Natural killer cell (primary cell): ENCODE measurements at regions of chr6 and their contacts with region 1.

Region 1: GRCh38 chr6:125114248-125114858 is 39.2 kb upstream of the TPD52L1 start:
- DNase-seq: peak in 1 of 2 donors; percentile 68
- ATAC-seq: peak in 2 of 3 donors; percentile 40 to 61
- H3K4me3 ChIP-seq: no peak overlapping the region
- H3K4me3 Mint-ChIP-seq: no peak overlapping the region
- H3K27ac ChIP-seq: no peak overlapping the region
- H3K27ac Mint-ChIP-seq: no peak overlapping the region
- H3K4me1 ChIP-seq: no peaks in the 10 kb centered on the region
- H3K4me1 Mint-ChIP-seq: no peaks in the 10 kb centered on the region
- H3K27me3 ChIP-seq: no peaks in the 10 kb centered on the region
- H3K27me3 Mint-ChIP-seq: peaks cover 0 to 3% of the 10 kb centered on the region in 2 donors
- CTCF ChIP-seq: peak; percentile 91

Region 2: GRCh38 chr6:124870611-124871459 is 243.5 kb before region 1 on chr6:
- intact Hi-C with region 1: loop called (anchors 1 kb)
- DNase-seq: peak in 1 of 2 donors; percentile 23
- ATAC-seq: no peak
- H3K4me3 ChIP-seq: no peak overlapping the region
- H3K4me3 Mint-ChIP-seq: no peak overlapping the region
- H3K27ac ChIP-seq: no peak overlapping the region
- H3K27ac Mint-ChIP-seq: no peak overlapping the region
- H3K4me1 ChIP-seq: no peaks in the 10 kb centered on the region
- H3K4me1 Mint-ChIP-seq: no peaks in the 10 kb centered on the region
- H3K27me3 ChIP-seq: no peaks in the 10 kb centered on the region
- H3K27me3 Mint-ChIP-seq: peaks cover 7 to 10% of the 10 kb centered on the region in 2 donors
- CTCF ChIP-seq: peak; percentile 55

Region 3: DNA sequence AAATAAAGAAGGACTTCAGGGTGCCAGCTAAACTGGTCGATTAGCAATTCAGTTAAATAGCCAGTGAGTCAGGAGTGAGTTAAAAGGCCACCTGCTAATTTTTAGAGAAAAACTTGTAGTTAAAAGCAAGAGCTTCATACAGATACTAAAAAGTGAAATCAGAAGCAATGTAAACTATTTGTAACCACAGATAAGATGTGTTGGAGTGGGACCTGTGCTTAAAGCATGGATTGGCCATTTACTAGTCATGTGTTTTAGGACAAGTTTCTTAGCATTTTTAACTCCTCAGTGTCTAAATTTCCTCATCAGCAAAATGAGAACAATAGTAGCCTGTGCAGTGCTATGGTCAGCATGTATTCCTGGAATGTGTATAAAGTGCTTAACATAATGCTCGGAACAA is 211.2 kb after region 1 on chr6:
- intact Hi-C with region 1: no loop called
- DNase-seq: no peak
- ATAC-seq: no peak
- H3K4me3 ChIP-seq: no peak overlapping the region
- H3K4me3 Mint-ChIP-seq: no peak overlapping the region
- H3K27ac ChIP-seq: no peak overlapping the region
- H3K27ac Mint-ChIP-seq: no peak overlapping the region
- H3K4me1 ChIP-seq: no peaks in the 10 kb centered on the region
- H3K4me1 Mint-ChIP-seq: no peaks in the 10 kb centered on the region
- H3K27me3 ChIP-seq: peaks cover 5% of the 10 kb centered on the region
- H3K27me3 Mint-ChIP-seq: peaks cover 30 to 43% of the 10 kb centered on the region in 2 donors
- CTCF ChIP-seq: no peak